ENCODE measurements at regions of chr7 and their contacts with region 1.

Region 1: GRCh38 chr7:66493235-66494181 is 135.2 kb upstream of the KCTD7 start:
- DNase-seq: peak; percentile 96
- H3K4me3 Mint-ChIP-seq: peak overlapping the region; percentile 84
- H3K27ac Mint-ChIP-seq: peak overlapping the region; percentile 93
- H3K4me1 Mint-ChIP-seq: peaks cover 11% of the 10 kb centered on the region
- H3K27me3 Mint-ChIP-seq: no peaks in the 10 kb centered on the region

Region 2: GRCh38 chr7:64794171-64794844 is 1699.2 kb before region 1 on chr7 and contains the start of gene ZNF138:
- CTCF ChIA-PET with region 1: no interaction called
- intact Hi-C with region 1: loop called (anchors 5 kb)
- DNase-seq: peak; percentile 98
- H3K4me3 Mint-ChIP-seq: peak within 1 kb of the TSS; percentile 97
- H3K27ac Mint-ChIP-seq: peak within 1 kb of the TSS; percentile 95
- H3K4me1 Mint-ChIP-seq: peaks cover 26% of the 10 kb centered on the region
- H3K27me3 Mint-ChIP-seq: no peaks in the 10 kb centered on the region
- total RNA-seq, gene ZNF138: 10.6 to 10.7 TPM

Region 3: GRCh38 chr7:66075590-66076461 is 417.7 kb before region 1 on chr7 and contains the start of gene ASL:
- CTCF ChIA-PET with region 1: no interaction called
- intact Hi-C with region 1: loop called (anchors 1 kb)
- DNase-seq: peak; percentile 87
- H3K4me3 Mint-ChIP-seq: peak within 1 kb of the TSS; percentile 70
- H3K27ac Mint-ChIP-seq: no peak within 1 kb of the TSS
- H3K4me1 Mint-ChIP-seq: peaks cover 12% of the 10 kb centered on the region
- H3K27me3 Mint-ChIP-seq: no peaks in the 10 kb centered on the region
- total RNA-seq, gene ASL: 12.7 to 13.6 TPM

Region 4: DNA sequence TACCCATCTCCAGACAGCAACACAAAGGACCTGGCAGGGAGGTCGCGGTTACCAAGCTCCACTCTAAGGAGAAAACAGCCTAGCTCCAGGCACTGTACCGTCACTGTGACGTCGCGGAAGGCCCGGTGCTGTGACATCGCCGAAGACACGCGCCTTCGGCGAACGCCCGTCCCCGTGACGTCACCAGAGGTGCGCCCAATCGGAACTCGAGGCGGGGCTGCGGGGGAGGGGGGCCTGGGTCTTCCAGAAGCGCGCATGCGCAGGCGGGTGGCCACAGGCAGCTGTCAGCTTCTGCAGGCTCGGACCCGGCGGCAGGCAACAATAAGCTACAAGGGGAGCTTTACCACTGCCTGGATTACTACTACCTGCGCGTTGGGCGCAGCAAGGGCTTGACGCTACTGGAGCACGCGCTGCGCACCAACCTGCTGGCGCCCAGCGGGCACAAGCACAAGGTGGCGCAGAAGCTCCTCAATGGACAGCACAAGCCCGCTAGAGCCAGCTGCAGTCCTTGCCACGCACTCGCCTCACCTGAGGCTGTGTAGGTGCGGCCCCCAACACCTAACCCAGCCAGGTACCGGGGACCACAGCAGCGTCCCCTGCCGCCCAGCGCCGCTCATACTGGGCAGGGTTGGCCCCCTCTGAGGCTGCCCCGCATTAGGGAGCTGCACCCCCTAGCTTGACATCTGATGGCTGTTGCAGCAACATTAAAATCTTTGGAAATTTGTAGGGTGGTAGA is 80.0 kb before region 1 on chr7:
- CTCF ChIA-PET with region 1: interaction called, 4 read pairs
- intact Hi-C with region 1: loop called (anchors 1 kb)
- DNase-seq: peak; percentile 83
- H3K4me3 Mint-ChIP-seq: peak overlapping the region; percentile 66
- H3K27ac Mint-ChIP-seq: no peak overlapping the region
- H3K4me1 Mint-ChIP-seq: peaks cover 12% of the 10 kb centered on the region
- H3K27me3 Mint-ChIP-seq: no peaks in the 10 kb centered on the region

Region 5: DNA sequence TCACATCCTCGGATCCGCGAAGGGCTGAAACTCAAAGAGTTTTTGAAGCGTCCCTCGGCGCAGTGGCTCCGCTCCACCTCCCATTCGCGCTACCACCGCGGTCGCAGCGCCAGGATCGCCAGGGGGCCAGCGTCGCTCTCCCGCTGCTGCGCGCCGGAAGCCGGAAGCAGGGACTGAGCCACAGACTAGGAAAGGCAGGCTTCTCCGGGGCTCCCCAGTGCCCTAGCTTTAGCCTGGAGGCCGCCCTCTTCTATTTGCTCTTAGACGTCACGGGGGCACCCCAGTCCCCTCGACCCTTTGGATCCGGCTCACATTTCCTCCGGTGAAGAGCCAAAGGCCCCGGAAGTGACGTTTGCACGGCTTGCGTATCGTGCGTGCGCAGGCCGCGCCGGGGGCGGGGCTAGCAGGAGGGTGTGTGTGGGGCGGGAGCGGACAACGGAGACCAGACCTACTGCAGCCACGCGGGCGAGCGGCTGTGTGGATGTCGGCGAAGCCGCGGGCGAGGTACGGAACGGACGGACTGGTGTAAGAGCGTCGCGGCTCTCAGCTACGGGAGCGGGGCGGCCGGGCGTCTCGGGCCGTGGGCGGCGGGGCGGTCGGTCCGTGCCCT is 160.7 kb after region 1 on chr7:
- CTCF ChIA-PET with region 1: no interaction called
- intact Hi-C with region 1: loop called (anchors 1 kb)
- DNase-seq: peak; percentile 98
- H3K4me3 Mint-ChIP-seq: peak overlapping the region; percentile 95
- H3K27ac Mint-ChIP-seq: peak overlapping the region; percentile 95
- H3K4me1 Mint-ChIP-seq: peaks cover 30% of the 10 kb centered on the region
- H3K27me3 Mint-ChIP-seq: no peaks in the 10 kb centered on the region

Region 6: DNA sequence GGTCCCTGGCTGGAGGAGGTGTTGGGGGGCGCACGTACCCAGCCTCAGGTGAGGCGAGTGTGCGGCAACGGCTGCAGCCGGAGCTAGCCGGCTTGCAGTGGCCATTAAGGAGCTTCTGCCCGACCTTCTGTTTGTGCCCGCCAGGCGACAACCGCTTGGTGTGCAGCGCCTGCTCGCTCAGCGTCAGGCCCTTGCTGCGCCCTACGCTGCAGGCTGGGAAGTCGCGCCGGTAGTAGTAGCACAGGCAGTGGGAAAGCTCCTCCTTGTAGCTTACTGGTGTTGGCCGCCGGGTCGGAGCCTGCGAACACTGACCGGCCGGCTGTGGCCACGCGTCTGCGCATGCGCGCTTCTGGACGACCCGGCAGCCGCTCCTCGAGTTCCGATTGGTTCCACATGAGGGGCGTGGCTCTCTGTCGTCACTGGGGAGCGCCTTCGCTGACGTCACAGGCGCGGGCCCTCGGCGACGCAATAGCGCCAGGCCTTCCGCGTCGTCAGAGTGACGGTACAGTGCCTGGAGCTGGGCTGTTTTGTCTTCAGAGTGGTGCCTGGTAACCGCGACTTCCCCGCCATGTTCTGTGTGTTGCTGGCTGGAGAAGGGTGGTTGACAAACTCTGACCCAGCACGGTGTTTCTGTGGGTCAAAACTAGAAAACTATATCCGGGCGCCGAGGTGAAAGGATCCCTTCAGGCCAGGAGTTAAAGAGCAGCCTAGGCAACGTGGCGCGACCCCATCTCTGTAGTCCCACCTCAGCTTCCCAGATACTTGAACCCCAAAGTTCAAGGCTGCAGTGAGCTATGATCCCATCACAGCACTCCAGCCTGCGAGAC is 351.3 kb after region 1 on chr7:
- CTCF ChIA-PET with region 1: no interaction called
- intact Hi-C with region 1: loop called (anchors 1 kb)
- DNase-seq: peak; percentile 99
- H3K4me3 Mint-ChIP-seq: peak overlapping the region; percentile 88
- H3K27ac Mint-ChIP-seq: peak overlapping the region; percentile 98
- H3K4me1 Mint-ChIP-seq: peaks cover 16% of the 10 kb centered on the region
- H3K27me3 Mint-ChIP-seq: peaks cover 2% of the 10 kb centered on the region